ENCODE measurements at regions of chr6 and their contacts with region 1.

Region 1: GRCh38 chr6:3939964-3940363 is 90.8 kb downstream of the FAM50B start:
- DNase-seq: no peak
- ATAC-seq: peak; percentile 55
- H3K4me3 ChIP-seq: no peak overlapping the region
- H3K27ac ChIP-seq: no peak overlapping the region
- H3K4me1 ChIP-seq: no peaks in the 10 kb centered on the region
- H3K27me3 ChIP-seq: no peaks in the 10 kb centered on the region
- CTCF ChIP-seq: no peak
- POLR2A ChIP-seq: no peak

Region 2: DNA sequence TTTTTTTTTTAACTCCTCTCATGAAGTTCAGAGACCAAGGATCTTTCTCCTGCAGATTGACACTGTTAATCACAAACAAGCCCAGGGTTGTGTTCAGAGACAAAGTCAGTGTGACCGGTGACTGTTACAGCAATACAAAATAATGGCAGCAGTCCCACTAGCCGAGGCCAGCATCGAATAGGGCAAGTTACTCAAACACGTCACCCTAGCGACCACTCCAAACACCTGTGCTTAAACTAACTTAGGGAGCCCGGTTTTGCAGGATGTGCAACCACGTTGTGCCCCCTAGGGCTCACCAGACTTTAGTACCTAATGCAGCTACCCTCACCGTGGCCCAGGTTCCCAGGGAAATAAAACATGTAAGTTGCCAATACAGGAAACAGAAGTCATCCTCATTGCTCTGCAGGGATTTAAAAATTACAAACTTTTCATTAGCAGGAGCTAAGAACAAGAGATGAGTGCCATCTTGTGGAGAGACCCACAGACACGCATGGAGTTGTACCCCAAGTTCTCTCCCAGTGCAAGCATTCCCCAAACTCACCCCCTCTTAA is 52.7 kb before region 1 on chr6:
- intact Hi-C with region 1: loop called (anchors 10 kb)
- DNase-seq: no peak
- ATAC-seq: no peak
- H3K4me3 ChIP-seq: no peak overlapping the region
- H3K27ac ChIP-seq: no peak overlapping the region
- H3K4me1 ChIP-seq: peaks cover 4% of the 10 kb centered on the region
- H3K27me3 ChIP-seq: no peaks in the 10 kb centered on the region
- CTCF ChIP-seq: peak in 5 of 7 experiments; percentile 21 to 41 (median 32)
- POLR2A ChIP-seq: no peak